Colonic mucosa (tissue), 4 donors: ENCODE measurements at regions of chr7 and their contacts with region 1.

Region 1: GRCh38 chr7:25093268-25093826 is 31.7 kb downstream of the CYCS start:
- DNase-seq: peak; percentile 83
- H3K4me3 ChIP-seq: no peak overlapping the region
- H3K27ac ChIP-seq: no peak overlapping the region
- H3K4me1 ChIP-seq: no peaks in the 10 kb centered on the region
- H3K27me3 ChIP-seq: no peaks in the 10 kb centered on the region
- CTCF ChIP-seq: peak; percentile 74

Region 2: DNA sequence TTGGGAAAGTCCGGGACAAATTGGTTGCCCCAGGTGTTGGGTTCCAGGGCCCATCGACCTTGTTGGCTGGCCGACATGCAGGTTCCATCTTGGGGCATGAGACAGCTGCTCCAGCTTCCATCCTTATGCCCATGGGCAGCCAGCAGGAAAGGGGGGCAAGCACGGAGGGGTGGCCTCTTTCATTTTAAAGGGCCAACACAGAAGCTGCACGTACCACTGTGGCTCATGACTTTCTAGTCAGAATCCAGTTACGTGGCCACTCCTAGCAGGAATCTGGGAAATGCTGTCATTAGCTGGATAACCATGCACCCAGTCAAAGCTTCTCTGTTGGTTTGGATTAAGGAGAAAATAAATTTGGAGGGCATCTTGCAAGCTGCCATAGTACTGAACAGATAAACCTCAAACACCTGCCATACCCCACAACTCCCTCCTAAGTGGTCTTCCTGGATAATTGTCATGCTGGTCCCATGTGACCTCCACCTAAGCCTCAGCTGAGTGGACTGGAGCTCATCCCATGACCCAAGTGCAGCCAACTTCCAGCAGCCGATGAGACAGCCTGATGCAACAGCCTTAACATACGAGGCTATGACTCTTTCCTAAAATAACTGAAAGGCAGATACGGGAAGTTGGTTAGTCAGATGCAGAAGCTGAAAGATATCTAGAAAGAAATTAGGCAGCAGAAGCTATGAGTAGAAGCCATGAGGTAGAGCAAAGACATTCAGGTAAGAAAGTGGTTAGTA is 314.6 kb before region 1 on chr7:
- intact Hi-C with region 1: no loop called
- DNase-seq: no peak
- H3K4me3 ChIP-seq: no peak overlapping the region
- H3K27ac ChIP-seq: no peak overlapping the region
- H3K4me1 ChIP-seq: no peaks in the 10 kb centered on the region
- H3K27me3 ChIP-seq: no peaks in the 10 kb centered on the region
- CTCF ChIP-seq: no peak

Region 3: GRCh38 chr7:24812310-24812945 is 280.9 kb before region 1 on chr7:
- intact Hi-C with region 1: loop called (anchors 5 kb)
- DNase-seq: peak; percentile 64
- H3K4me3 ChIP-seq: no peak overlapping the region
- H3K27ac ChIP-seq: no peak overlapping the region
- H3K4me1 ChIP-seq: no peaks in the 10 kb centered on the region
- H3K27me3 ChIP-seq: no peaks in the 10 kb centered on the region
- CTCF ChIP-seq: peak; percentile 87

Region 4: GRCh38 chr7:24877790-24878311 is 215.5 kb before region 1 on chr7:
- intact Hi-C with region 1: no loop called
- DNase-seq: no peak
- H3K4me3 ChIP-seq: no peak overlapping the region
- H3K27ac ChIP-seq: no peak overlapping the region
- H3K4me1 ChIP-seq: no peaks in the 10 kb centered on the region
- H3K27me3 ChIP-seq: no peaks in the 10 kb centered on the region
- CTCF ChIP-seq: no peak

Region 5: GRCh38 chr7:24991353-24991752 is 102.0 kb before region 1 on chr7:
- intact Hi-C with region 1: no loop called
- DNase-seq: no peak
- H3K4me3 ChIP-seq: no peak overlapping the region
- H3K27ac ChIP-seq: no peak overlapping the region
- H3K4me1 ChIP-seq: no peaks in the 10 kb centered on the region
- H3K27me3 ChIP-seq: no peaks in the 10 kb centered on the region
- CTCF ChIP-seq: no peak

Region 6: DNA sequence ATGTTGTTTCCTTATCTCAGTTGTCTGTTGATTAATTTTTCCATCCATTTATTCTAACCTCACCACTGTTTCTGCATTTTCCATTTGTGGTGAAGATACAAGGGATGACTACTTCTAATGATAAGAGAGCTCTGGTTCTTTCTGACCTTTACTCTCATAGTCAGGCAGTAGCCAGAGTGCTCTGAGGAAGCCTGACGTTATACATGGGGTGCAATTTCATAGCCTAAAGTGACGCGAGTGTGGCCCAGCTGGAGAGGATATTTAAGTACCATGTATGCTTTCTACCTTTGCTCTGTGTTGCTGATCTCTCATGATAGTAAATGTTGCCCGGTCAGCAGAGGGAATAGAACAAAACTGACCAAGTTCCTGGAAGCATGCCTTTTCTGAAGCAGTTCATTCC is 65.6 kb after region 1 on chr7:
- intact Hi-C with region 1: loop called (anchors 2 kb)
- DNase-seq: no peak
- H3K4me3 ChIP-seq: no peak overlapping the region
- H3K27ac ChIP-seq: no peak overlapping the region
- H3K4me1 ChIP-seq: no peaks in the 10 kb centered on the region
- H3K27me3 ChIP-seq: no peaks in the 10 kb centered on the region
- CTCF ChIP-seq: no peak

Region 7: DNA sequence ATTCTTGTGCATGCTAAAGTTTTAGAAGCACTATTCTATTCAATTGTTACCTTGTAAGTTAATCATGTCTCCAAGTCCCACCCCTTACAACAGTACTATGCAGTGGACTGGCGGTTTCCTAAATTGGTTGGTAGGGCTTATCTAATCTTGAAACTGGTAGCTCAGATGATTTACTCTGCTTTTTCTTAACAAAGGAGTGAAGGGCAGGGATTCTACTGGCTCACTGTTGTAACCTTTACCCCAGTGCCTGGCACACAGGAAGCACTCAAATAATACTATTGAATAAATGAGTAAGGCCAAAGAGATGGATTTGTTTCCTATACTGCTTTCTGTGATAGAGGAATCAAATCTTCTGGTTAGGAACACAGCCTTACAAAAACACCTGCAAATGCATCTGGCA is 77.7 kb after region 1 on chr7:
- intact Hi-C with region 1: no loop called
- DNase-seq: peak; percentile 59
- H3K4me3 ChIP-seq: no peak overlapping the region
- H3K27ac ChIP-seq: peak overlapping the region; percentile 13
- H3K4me1 ChIP-seq: peaks cover 6% of the 10 kb centered on the region
- H3K27me3 ChIP-seq: no peaks in the 10 kb centered on the region
- CTCF ChIP-seq: no peak